ENCODE measurements at regions of chr11 and their contacts with region 1.

Region 1: DNA sequence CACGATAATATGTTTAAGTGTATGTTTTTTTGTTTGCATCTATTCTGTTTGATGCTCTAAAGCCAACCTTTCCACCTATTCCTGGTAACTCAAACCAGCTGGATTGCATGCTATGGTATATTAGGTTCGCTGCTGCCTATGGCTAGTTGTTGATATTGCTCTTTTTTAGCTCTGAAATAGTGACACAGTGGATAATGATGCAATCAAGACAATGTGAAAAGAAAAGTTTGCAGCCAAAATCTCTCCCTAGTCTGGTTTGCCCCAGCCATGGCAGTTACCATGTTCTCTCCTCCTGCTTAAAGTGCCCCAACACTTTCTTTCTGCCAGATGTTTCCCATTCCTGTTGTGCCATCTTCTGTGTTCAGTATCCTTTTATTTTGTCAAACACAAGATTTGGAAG is 269.7 kb downstream of the DYNC2H1 start:
- DNase-seq: no peak
- ATAC-seq: no peak
- H3K4me3 ChIP-seq: no peak overlapping the region
- H3K27ac ChIP-seq: no peak overlapping the region
- H3K4me1 ChIP-seq: no peaks in the 10 kb centered on the region
- H3K27me3 ChIP-seq: no peaks in the 10 kb centered on the region
- CTCF ChIP-seq: no peak

Region 2: DNA sequence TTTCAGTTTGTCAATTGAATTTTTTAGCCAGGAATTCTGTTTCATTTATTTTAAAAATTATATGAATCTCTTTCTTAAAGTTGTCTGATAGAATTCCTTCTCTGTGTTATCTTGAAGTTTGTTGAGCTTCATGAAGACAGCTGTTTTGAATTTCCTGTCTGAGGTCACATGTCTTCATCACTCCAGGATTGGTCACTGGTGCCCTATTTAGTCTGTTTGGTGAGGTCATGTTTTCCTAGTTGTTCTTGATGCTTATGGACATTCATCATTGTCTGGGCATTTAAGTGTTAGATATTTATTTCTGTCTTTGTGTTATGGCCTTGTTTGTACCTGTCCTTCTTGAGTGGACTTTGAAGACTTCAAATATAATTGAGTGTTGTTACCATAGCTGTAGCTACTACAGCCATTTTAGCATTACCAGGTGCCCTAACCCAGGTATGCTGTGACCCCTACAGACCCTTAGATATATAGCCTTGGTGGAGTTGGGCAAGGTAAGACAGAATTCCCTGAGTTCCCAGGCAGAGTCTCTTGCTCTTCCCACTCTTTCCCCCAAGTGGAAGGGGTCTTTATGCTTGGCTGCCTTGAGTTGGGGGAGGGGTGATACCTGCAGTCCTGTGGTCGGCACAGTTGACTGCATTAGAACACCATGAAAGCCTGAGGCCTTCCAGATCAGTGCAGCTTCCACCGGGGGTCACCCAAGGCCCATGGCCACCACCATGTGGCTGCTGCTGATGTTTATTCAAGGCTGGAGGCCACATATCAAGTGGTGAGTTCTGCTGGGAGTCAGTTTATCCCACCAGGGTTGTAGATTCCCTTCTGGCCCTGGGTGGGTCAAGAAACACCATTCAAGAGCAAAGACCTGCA is 40.1 kb before region 1 on chr11:
- intact Hi-C with region 1: no loop called
- DNase-seq: no peak
- ATAC-seq: no peak
- H3K4me3 ChIP-seq: no peak overlapping the region
- H3K27ac ChIP-seq: no peak overlapping the region
- H3K4me1 ChIP-seq: no peaks in the 10 kb centered on the region
- H3K27me3 ChIP-seq: no peaks in the 10 kb centered on the region
- CTCF ChIP-seq: no peak

Region 3: GRCh38 chr11:103413266-103413888 is 34.4 kb after region 1 on chr11:
- intact Hi-C with region 1: no loop called
- DNase-seq: no peak
- ATAC-seq: no peak
- H3K4me3 ChIP-seq: no peak overlapping the region
- H3K27ac ChIP-seq: no peak overlapping the region
- H3K4me1 ChIP-seq: no peaks in the 10 kb centered on the region
- H3K27me3 ChIP-seq: no peaks in the 10 kb centered on the region
- CTCF ChIP-seq: no peak

Region 4: GRCh38 chr11:105229257-105229656 is 1850.3 kb after region 1 on chr11:
- intact Hi-C with region 1: loop called in 1 of 2 experiments (anchors 10 kb)
- DNase-seq: no peak
- ATAC-seq: no peak
- H3K4me3 ChIP-seq: no peak overlapping the region
- H3K27ac ChIP-seq: no peak overlapping the region
- H3K4me1 ChIP-seq: peaks cover 4% of the 10 kb centered on the region
- H3K27me3 ChIP-seq: no peaks in the 10 kb centered on the region
- CTCF ChIP-seq: no peak

Measured in psoas muscle (tissue), 8 donors.